Endothelial cell of umbilical vein (primary cell): ENCODE measurements at regions of chr10 and their contacts with region 1.

Region 1: DNA sequence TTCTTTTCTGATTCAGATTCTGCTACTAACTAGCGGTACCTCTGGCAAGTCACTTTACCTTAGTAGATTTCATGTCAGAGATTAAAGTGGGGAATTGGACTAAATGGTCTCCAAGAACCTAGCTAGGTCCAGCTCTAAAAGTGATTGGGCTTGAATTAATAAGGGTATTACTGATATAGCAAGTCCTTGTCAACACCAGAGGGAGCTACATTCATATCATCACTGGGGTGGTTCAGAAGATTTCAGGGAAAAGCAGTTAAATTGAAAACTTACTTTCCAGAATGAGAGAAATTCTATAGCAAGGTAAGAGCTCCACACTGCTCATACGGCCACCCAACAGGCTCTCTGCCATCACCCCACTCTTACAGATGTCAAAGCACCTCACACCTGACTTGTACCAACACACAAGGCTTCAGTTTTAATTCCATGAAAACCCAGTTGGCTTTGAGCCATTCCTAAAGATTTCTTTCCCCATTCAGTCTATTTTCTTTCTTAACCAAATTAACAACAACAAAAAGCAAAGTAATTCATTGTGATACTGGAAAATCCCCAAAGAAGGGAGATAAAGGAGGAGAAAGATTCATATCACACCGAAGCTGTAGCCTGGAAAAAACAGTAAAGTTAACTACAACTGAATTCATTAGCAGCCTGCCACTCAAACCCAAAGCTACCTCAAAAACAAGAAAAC is 38.0 kb upstream of the SPOCK2 start:
- DNase-seq: peak; percentile 65
- H3K4me3 ChIP-seq: no peak overlapping the region
- H3K27ac ChIP-seq: no peak overlapping the region
- H3K4me1 ChIP-seq: no peaks in the 10 kb centered on the region
- H3K27me3 ChIP-seq: no peaks in the 10 kb centered on the region
- CTCF ChIP-seq: peak; percentile 39
- POLR2A ChIP-seq: no peak

Region 2: DNA sequence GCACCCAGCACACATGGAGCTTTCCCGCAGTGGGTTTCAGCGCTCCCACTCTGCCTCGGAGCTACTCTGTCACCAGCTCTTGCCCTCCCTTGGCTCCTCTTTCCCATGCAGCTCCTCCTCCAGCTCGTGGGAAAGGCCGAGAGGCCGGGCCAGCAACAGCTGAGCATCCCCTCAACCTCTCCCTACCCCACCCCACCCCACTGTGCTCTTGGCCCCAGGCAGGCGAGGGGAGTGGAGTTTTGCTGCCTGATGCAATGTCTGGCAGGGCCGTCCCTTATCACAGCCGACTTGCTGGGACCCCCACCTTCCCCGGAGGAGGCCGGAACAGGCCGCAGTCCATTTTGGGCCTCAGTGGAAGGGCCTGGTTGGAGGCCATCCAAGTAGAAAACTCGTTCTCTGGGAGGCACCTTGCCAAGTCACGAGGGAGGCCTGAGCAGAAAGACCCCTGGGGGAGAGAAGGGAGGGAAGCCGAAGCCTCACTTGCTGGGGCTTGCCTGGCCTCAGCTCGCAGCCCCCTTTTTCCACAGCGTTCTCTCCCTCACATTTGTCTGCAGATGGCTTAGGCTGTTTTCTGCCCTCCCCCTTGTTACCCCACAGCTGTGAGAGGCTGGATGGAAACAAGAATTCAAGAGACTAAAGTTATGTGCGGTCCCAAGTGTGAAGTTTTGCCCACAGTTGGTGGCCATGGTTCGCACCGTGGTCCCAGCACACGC is 126.8 kb before region 1 on chr10:
- CTCF ChIA-PET with region 1: no interaction called
- POLR2A ChIA-PET with region 1: no interaction called
- dilution Hi-C with region 1: no loop called
- intact Hi-C with region 1: no loop called
- DNase-seq: peak; percentile 55
- H3K4me3 ChIP-seq: no peak overlapping the region
- H3K27ac ChIP-seq: no peak overlapping the region
- H3K4me1 ChIP-seq: peaks cover 12% of the 10 kb centered on the region
- H3K27me3 ChIP-seq: no peaks in the 10 kb centered on the region
- CTCF ChIP-seq: no peak
- POLR2A ChIP-seq: no peak

Region 3: DNA sequence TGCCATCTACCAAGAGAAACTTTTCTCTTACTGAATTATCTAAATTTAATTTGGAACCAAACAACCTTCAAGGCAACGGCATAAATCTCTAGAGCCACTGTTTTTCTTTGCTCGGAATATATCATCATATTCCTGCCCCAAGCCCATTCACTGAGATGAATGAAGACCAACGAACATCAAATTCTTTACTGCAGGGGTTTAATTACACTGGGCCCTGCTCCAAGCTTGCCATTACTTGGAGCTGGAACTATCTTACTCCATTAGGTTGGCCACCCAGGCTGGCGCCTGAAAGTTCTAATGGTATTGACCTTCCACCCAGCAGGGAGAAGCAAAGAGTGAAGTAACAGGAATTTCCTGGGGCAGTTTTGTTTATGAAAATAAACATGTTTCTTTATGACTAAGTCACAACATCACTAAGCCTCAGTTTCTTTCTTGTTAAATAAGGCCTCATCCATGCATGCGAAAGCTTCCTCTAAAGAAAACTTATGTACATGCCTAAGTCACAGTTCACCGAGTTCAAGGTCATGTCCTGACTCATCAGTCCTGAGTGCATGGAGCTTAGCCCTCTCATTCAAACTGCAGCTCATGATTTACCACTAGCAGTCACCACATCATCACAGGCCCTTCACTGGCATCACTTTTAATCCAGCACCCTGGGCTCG is 47.4 kb after region 1 on chr10:
- CTCF ChIA-PET with region 1: interaction called, 18 read pairs
- POLR2A ChIA-PET with region 1: no interaction called
- dilution Hi-C with region 1: no loop called
- intact Hi-C with region 1: loop called (anchors 5 kb)
- DNase-seq: no peak
- H3K4me3 ChIP-seq: no peak overlapping the region
- H3K27ac ChIP-seq: no peak overlapping the region
- H3K4me1 ChIP-seq: peaks cover 42% of the 10 kb centered on the region
- H3K27me3 ChIP-seq: no peaks in the 10 kb centered on the region
- CTCF ChIP-seq: no peak
- POLR2A ChIP-seq: no peak

Region 4: GRCh38 chr10:72223743-72224101 is 97.4 kb after region 1 on chr10:
- CTCF ChIA-PET with region 1: interaction called, 193 read pairs
- POLR2A ChIA-PET with region 1: no interaction called
- dilution Hi-C with region 1: no loop called
- intact Hi-C with region 1: loop called (anchors 1 kb)
- DNase-seq: peak; percentile 59
- H3K4me3 ChIP-seq: no peak overlapping the region
- H3K27ac ChIP-seq: peak overlapping the region; percentile 67
- H3K4me1 ChIP-seq: peaks cover 11% of the 10 kb centered on the region
- H3K27me3 ChIP-seq: no peaks in the 10 kb centered on the region
- CTCF ChIP-seq: no peak
- POLR2A ChIP-seq: no peak

Region 5: DNA sequence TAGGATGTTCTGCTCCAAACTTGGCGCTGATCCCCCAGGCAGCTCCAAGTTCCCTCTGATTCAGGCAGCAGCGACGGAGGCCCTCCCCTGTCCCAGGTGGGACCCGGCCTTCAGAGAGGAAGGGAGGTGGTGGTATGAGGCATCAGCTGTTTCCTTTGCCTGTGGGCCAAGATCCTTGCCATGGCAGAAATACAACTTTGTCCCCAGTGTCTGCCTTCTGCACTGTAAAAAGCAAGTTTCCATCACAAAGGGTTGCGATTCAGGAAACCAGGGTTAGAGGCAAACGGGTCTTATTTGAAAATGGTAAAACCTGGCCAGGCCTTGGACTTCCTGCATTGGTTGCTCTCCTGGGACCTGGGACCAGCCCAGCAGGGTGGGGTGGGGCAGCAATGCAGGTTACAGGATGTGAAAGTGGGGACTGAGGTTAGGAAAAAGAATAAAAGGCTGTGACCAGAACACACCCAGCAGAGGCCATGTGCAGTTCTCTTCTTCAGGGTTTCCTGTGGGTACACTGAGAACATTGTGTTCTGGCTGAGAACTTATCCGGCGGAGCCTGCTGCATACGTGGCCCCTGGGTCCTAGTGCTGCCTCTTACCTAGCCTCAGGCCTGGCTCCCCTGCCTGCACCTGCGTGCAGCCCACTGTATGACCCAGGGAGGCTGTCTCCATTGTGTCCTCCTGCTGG is 122.3 kb after region 1 on chr10:
- CTCF ChIA-PET with region 1: interaction called, 10 read pairs
- POLR2A ChIA-PET with region 1: no interaction called
- dilution Hi-C with region 1: no loop called
- intact Hi-C with region 1: no loop called
- DNase-seq: peak; percentile 91
- H3K4me3 ChIP-seq: no peak overlapping the region
- H3K27ac ChIP-seq: peak overlapping the region; percentile 89
- H3K4me1 ChIP-seq: peaks cover 39% of the 10 kb centered on the region
- H3K27me3 ChIP-seq: no peaks in the 10 kb centered on the region
- CTCF ChIP-seq: no peak
- POLR2A ChIP-seq: no peak

Region 6: GRCh38 chr10:72319416-72320254 is 193.3 kb after region 1 on chr10:
- CTCF ChIA-PET with region 1: interaction called, 12 read pairs
- POLR2A ChIA-PET with region 1: interaction called, 3 read pairs
- dilution Hi-C with region 1: no loop called
- intact Hi-C with region 1: no loop called
- DNase-seq: peak; percentile 98
- H3K4me3 ChIP-seq: no peak overlapping the region
- H3K27ac ChIP-seq: peak overlapping the region; percentile 100
- H3K4me1 ChIP-seq: peaks cover 69% of the 10 kb centered on the region
- H3K27me3 ChIP-seq: no peaks in the 10 kb centered on the region
- CTCF ChIP-seq: no peak
- POLR2A ChIP-seq: no peak